Naive thymus-derived CD4-positive, alpha-beta T cell (primary cell): ENCODE measurements at regions of chr6 and their contacts with region 1.

Region 1: DNA sequence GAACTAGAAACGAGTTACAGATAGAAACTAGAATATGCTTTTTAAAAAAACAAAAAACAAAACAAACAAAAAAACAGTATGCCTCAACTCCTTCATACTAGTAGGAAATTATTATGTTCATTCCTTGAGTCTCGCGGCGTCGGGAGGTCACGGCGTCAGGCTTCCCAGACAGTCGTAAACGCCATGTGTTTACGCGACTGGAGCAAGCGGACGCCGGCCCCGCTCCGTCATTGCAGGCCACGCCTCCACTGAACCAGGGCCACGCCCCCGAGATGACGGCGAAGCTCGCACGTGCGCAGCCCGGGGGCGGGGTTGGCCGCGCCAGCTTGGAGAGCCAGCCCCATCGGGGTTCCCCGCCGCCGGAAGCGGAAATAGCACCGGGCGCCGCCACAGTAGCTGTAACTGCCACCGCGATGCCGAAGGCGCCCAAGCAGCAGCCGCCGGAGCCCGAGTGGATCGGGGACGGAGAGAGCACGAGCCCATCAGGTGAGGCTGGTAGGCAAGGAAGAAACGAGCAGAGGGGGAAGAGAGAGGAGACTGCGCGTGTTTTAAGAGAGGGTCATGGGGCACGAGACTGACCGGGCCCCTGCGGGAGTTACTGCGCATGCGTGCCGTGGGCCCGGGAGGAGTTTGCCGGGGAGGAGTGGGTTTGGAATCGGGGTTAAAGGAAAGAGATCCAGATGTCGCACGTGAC is at the start of gene ABCF1:
- DNase-seq: peak; percentile 98 to 100 (median 99)
- ATAC-seq: peak; percentile 99
- H3K4me3 ChIP-seq: peak within 1 kb of the TSS; percentile 94
- H3K4me3 Mint-ChIP-seq: peak within 1 kb of the TSS; percentile 94 to 100 (median 98)
- H3K27ac ChIP-seq: peak within 1 kb of the TSS; percentile 98
- H3K27ac Mint-ChIP-seq: peak within 1 kb of the TSS; percentile 96 to 100 (median 99)
- H3K4me1 ChIP-seq: peaks cover 33 to 38% of the 10 kb centered on the region in 2 donors
- H3K4me1 Mint-ChIP-seq: peaks cover 55 to 79% (median 64%) of the 10 kb centered on the region in 7 donors
- H3K27me3 ChIP-seq: no peaks in the 10 kb centered on the region
- H3K27me3 Mint-ChIP-seq: peaks cover 0 to 4% (median 0%) of the 10 kb centered on the region in 5 donors
- total RNA-seq, gene ABCF1: 65.1 to 116 (median 86.6) TPM

Region 2: DNA sequence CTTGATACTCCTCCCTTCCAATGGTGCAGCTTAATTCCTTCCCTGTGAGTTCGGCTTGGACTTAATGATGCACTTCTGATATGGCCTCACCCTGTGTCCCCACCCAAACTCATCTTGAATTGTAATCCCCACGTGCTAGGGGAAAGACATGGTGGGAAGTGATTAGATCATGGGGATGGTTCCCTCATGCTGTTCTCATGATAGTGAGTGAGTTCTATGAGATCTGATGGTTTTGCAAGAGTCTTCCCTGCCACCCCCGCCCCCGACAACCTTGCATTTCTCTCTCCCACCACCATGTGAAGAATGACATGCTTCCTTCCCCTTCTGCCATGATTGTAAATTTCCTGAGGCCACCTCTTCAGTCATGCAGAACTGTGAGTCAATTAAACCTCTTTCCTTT is 793.9 kb before region 1 on chr6:
- CTCF ChIA-PET with region 1: no interaction called
- POLR2A ChIA-PET with region 1: no interaction called
- intact Hi-C with region 1: no loop called
- DNase-seq: no peak
- ATAC-seq: no peak
- H3K4me3 ChIP-seq: no peak overlapping the region
- H3K4me3 Mint-ChIP-seq: no peak overlapping the region
- H3K27ac ChIP-seq: no peak overlapping the region
- H3K27ac Mint-ChIP-seq: no peak overlapping the region
- H3K4me1 ChIP-seq: no peaks in the 10 kb centered on the region
- H3K4me1 Mint-ChIP-seq: peaks cover 0 to 8% (median 0%) of the 10 kb centered on the region in 7 donors
- H3K27me3 ChIP-seq: peaks cover 0 to 3% of the 10 kb centered on the region in 2 donors
- H3K27me3 Mint-ChIP-seq: peaks cover 10 to 54% (median 53%) of the 10 kb centered on the region in 5 donors

Region 3: GRCh38 chr6:30212865-30213666 is 358.2 kb before region 1 on chr6 and contains the start of gene TRIM26:
- CTCF ChIA-PET with region 1: no interaction called
- POLR2A ChIA-PET with region 1: interaction called, 3 read pairs
- intact Hi-C with region 1: loop called (anchors 5 to 10 kb)
- DNase-seq: peak; percentile 88 to 99 (median 97)
- ATAC-seq: peak; percentile 94
- H3K4me3 ChIP-seq: peak within 1 kb of the TSS; percentile 83
- H3K4me3 Mint-ChIP-seq: peak within 1 kb of the TSS; percentile 89 to 100 (median 96)
- H3K27ac ChIP-seq: peak within 1 kb of the TSS; percentile 99
- H3K27ac Mint-ChIP-seq: peak within 1 kb of the TSS; percentile 96 to 100 (median 99)
- H3K4me1 ChIP-seq: peaks cover 32 to 39% of the 10 kb centered on the region in 2 donors
- H3K4me1 Mint-ChIP-seq: peaks cover 47 to 62% (median 52%) of the 10 kb centered on the region in 7 donors
- H3K27me3 ChIP-seq: no peaks in the 10 kb centered on the region
- H3K27me3 Mint-ChIP-seq: peaks cover 0 to 5% (median 0%) of the 10 kb centered on the region in 5 donors
- total RNA-seq, gene TRIM26: 40.1 to 73.1 (median 49.1) TPM

Region 4: GRCh38 chr6:30326526-30327260 is 244.5 kb before region 1 on chr6 and contains the start of gene TRIM39:
- CTCF ChIA-PET with region 1: no interaction called
- POLR2A ChIA-PET with region 1: no interaction called
- intact Hi-C with region 1: loop called in 1 of 2 experiments (anchors 5 kb)
- DNase-seq: peak; percentile 88 to 94 (median 92)
- ATAC-seq: peak; percentile 76
- H3K4me3 ChIP-seq: peak within 1 kb of the TSS; percentile 70
- H3K4me3 Mint-ChIP-seq: peak within 1 kb of the TSS; percentile 93 to 99 (median 97)
- H3K27ac ChIP-seq: peak within 1 kb of the TSS; percentile 100
- H3K27ac Mint-ChIP-seq: peak within 1 kb of the TSS; percentile 92 to 100 (median 99)
- H3K4me1 ChIP-seq: peaks cover 34 to 48% of the 10 kb centered on the region in 2 donors
- H3K4me1 Mint-ChIP-seq: peaks cover 42 to 70% (median 63%) of the 10 kb centered on the region in 7 donors
- H3K27me3 ChIP-seq: no peaks in the 10 kb centered on the region
- H3K27me3 Mint-ChIP-seq: no peaks in the 10 kb centered on the region
- total RNA-seq, gene TRIM39: 12.8 to 42.1 (median 26.4) TPM

Region 5: GRCh38 chr6:30515932-30516753 is 55.1 kb before region 1 on chr6:
- CTCF ChIA-PET with region 1: no interaction called
- POLR2A ChIA-PET with region 1: interaction called, 4 read pairs
- intact Hi-C with region 1: loop called in 1 of 2 experiments (anchors 1 kb)
- DNase-seq: peak; percentile 60 to 97 (median 95)
- ATAC-seq: peak; percentile 93
- H3K4me3 ChIP-seq: peak overlapping the region; percentile 64
- H3K4me3 Mint-ChIP-seq: peak overlapping the region; percentile 82 to 96 (median 89)
- H3K27ac ChIP-seq: peak overlapping the region; percentile 82
- H3K27ac Mint-ChIP-seq: peak overlapping the region; percentile 97 to 100 (median 99)
- H3K4me1 ChIP-seq: peaks cover 20 to 62% of the 10 kb centered on the region in 2 donors
- H3K4me1 Mint-ChIP-seq: peaks cover 31 to 91% (median 62%) of the 10 kb centered on the region in 7 donors
- H3K27me3 ChIP-seq: no peaks in the 10 kb centered on the region
- H3K27me3 Mint-ChIP-seq: no peaks in the 10 kb centered on the region

Region 6: DNA sequence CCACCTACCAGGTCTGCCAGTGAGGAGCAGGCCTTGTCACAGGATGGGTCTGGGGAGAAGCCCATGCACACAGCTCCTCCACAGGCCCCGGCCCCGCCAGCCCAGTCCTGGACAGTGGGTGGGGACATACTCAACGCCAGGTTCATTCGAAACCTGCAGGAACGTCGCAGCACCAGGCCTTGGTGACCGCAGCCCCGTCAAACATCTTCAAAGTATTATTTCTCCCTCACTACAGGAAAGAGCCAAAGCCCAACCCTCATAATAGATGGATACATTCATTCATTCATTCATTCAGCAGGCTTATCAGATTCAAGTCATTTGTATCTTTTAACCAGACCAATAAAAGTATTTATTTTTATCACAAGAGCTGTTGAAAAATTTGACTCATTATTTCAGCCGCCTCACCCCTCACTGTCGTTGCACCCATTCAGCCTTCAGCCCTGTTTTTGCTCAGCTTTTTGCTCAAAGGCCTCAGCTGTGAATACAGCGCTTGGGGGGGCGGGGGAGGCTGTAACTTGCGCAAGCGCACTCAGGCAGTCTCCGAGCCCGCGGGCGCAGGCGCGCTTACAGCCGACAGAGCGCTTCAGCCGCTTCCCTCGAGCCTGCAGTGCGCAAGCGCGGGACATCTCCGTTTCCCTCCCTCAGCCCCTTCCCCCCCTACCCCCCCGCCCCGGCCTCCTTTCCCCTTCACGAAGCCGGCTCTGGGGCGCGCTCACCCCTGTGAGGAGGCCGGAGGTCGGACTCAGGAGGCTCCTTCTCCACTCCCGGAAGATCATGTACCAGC is 75.4 kb after region 1 on chr6 and contains the start of gene C6orf136:
- CTCF ChIA-PET with region 1: no interaction called
- POLR2A ChIA-PET with region 1: no interaction called
- intact Hi-C with region 1: loop called (anchors 1 kb)
- DNase-seq: peak in 8 of 9 donors; percentile 77 to 94 (median 92)
- ATAC-seq: peak; percentile 90
- H3K4me3 ChIP-seq: peak within 1 kb of the TSS; percentile 93
- H3K4me3 Mint-ChIP-seq: peak within 1 kb of the TSS; percentile 82 to 93 (median 88)
- H3K27ac ChIP-seq: peak within 1 kb of the TSS; percentile 91
- H3K27ac Mint-ChIP-seq: peak within 1 kb of the TSS; percentile 79 to 93 (median 91)
- H3K4me1 ChIP-seq: peaks cover 11 to 17% of the 10 kb centered on the region in 2 donors
- H3K4me1 Mint-ChIP-seq: peaks cover 24 to 38% (median 32%) of the 10 kb centered on the region in 7 donors
- H3K27me3 ChIP-seq: no peaks in the 10 kb centered on the region
- H3K27me3 Mint-ChIP-seq: no peaks in the 10 kb centered on the region
- total RNA-seq, gene C6orf136: 23.7 to 38.0 (median 32.1) TPM

Region 7: GRCh38 chr6:30700340-30700739 is 129.1 kb after region 1 on chr6:
- CTCF ChIA-PET with region 1: no interaction called
- POLR2A ChIA-PET with region 1: no interaction called
- intact Hi-C with region 1: no loop called
- DNase-seq: no peak
- ATAC-seq: no peak
- H3K4me3 ChIP-seq: no peak overlapping the region
- H3K4me3 Mint-ChIP-seq: no peak overlapping the region
- H3K27ac ChIP-seq: no peak overlapping the region
- H3K27ac Mint-ChIP-seq: no peak overlapping the region
- H3K4me1 ChIP-seq: no peaks in the 10 kb centered on the region
- H3K4me1 Mint-ChIP-seq: peaks cover 0 to 11% (median 0%) of the 10 kb centered on the region in 7 donors
- H3K27me3 ChIP-seq: no peaks in the 10 kb centered on the region
- H3K27me3 Mint-ChIP-seq: no peaks in the 10 kb centered on the region

Region 8: GRCh38 chr6:30769088-30769852 is 198.0 kb after region 1 on chr6:
- CTCF ChIA-PET with region 1: no interaction called
- POLR2A ChIA-PET with region 1: no interaction called
- intact Hi-C with region 1: no loop called
- DNase-seq: peak in 8 of 9 donors; percentile 47 to 85 (median 57)
- ATAC-seq: peak; percentile 81
- H3K4me3 ChIP-seq: peak overlapping the region; percentile 15
- H3K4me3 Mint-ChIP-seq: peak overlapping the region; percentile 55 to 84 (median 80)
- H3K27ac ChIP-seq: no peak overlapping the region
- H3K27ac Mint-ChIP-seq: peak overlapping the region; percentile 36 to 95 (median 86)
- H3K4me1 ChIP-seq: peaks cover 24 to 38% of the 10 kb centered on the region in 2 donors
- H3K4me1 Mint-ChIP-seq: peaks cover 38 to 90% (median 77%) of the 10 kb centered on the region in 7 donors
- H3K27me3 ChIP-seq: no peaks in the 10 kb centered on the region
- H3K27me3 Mint-ChIP-seq: no peaks in the 10 kb centered on the region